Vagina (tissue), 2 donors: ENCODE measurements at regions of chr6 and their contacts with region 1.

Region 1: GRCh38 chr6:115365783-115366182 is 694.9 kb downstream of the FRK start:
- DNase-seq: no peak
- H3K4me3 ChIP-seq: no peak overlapping the region
- H3K27ac ChIP-seq: no peak overlapping the region
- H3K4me1 ChIP-seq: no peaks in the 10 kb centered on the region
- H3K27me3 ChIP-seq: no peaks in the 10 kb centered on the region
- CTCF ChIP-seq: no peak
- POLR2A ChIP-seq: no peak

Region 2: GRCh38 chr6:115415378-115415777 is 49.6 kb after region 1 on chr6:
- intact Hi-C with region 1: loop called (anchors 2 kb)
- DNase-seq: no peak
- H3K4me3 ChIP-seq: no peak overlapping the region
- H3K27ac ChIP-seq: no peak overlapping the region
- H3K4me1 ChIP-seq: no peaks in the 10 kb centered on the region
- H3K27me3 ChIP-seq: no peaks in the 10 kb centered on the region
- CTCF ChIP-seq: no peak
- POLR2A ChIP-seq: no peak